Sigmoid colon (tissue), 7 donors: ENCODE measurements at regions of chrX and their contacts with region 1.

Region 1: DNA sequence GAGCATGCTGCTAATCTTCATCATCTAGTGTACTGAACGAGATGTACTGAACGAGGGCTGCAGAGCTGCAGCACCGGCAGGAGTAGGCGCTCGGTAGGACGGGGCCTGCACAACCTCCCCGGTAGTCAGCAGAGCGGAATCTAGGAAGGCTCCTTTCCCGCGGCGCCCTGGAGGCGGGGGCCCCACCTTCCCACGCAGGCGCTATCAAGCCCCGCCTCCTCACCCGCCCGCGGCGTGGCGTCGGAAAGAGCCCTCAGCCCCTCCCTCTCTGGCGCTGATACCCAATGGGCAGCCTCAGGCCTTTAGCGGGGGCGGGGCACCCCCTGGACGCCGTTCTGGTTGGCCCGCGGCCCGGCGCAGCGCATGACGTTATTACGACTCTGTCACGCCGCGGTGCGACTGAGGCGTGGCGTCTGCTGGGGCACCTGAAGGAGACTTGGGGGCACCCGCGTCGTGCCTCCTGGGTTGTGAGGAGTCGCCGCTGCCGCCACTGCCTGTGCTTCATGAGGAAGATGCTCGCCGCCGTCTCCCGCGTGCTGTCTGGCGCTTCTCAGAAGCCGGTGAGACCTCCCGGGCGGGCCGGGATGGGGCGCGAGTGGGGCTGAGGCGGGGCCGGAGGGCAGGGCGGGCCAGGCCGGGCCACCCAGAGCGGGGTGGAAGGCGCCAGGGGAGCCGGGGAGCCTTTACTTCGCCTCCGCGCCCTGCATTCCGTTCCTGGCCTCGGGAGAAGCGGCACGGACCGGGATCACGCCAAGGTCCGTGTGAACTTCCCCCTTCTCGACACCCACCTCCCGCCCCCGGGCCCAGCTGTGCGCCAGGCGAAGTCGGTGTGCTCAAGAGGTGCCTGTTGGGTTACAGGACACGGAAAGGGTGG is at the start of gene PDHA1:
- DNase-seq: peak; percentile 96
- H3K4me3 ChIP-seq: peak within 1 kb of the TSS; percentile 66 to 74 (median 70)
- H3K27ac ChIP-seq: peak within 1 kb of the TSS; percentile 83 to 95 (median 92)
- H3K4me1 ChIP-seq: peaks cover 0 to 14% (median 9%) of the 10 kb centered on the region in 4 donors
- H3K27me3 ChIP-seq: no peaks in the 10 kb centered on the region
- CTCF ChIP-seq: no peak
- EP300 ChIP-seq: peak in 1 of 4 donors; percentile 60
- POLR2A ChIP-seq: peak; percentile 4 to 39
- total RNA-seq, gene PDHA1: 51.7 to 71.3 (median 60.3) TPM

Region 2: GRCh38 chrX:18886344-18887161 is 457.2 kb before region 1 on chrX:
- intact Hi-C with region 1: loop called (anchors 10 kb)
- DNase-seq: peak; percentile 88
- H3K4me3 ChIP-seq: peak overlapping the region; percentile 17 to 41 (median 33)
- H3K27ac ChIP-seq: peak overlapping the region; percentile 69 to 72 (median 70)
- H3K4me1 ChIP-seq: peaks cover 0 to 21% (median 15%) of the 10 kb centered on the region in 4 donors
- H3K27me3 ChIP-seq: no peaks in the 10 kb centered on the region
- CTCF ChIP-seq: peak; percentile 33 to 61 (median 50)
- EP300 ChIP-seq: no peak
- POLR2A ChIP-seq: no peak

Region 3: DNA sequence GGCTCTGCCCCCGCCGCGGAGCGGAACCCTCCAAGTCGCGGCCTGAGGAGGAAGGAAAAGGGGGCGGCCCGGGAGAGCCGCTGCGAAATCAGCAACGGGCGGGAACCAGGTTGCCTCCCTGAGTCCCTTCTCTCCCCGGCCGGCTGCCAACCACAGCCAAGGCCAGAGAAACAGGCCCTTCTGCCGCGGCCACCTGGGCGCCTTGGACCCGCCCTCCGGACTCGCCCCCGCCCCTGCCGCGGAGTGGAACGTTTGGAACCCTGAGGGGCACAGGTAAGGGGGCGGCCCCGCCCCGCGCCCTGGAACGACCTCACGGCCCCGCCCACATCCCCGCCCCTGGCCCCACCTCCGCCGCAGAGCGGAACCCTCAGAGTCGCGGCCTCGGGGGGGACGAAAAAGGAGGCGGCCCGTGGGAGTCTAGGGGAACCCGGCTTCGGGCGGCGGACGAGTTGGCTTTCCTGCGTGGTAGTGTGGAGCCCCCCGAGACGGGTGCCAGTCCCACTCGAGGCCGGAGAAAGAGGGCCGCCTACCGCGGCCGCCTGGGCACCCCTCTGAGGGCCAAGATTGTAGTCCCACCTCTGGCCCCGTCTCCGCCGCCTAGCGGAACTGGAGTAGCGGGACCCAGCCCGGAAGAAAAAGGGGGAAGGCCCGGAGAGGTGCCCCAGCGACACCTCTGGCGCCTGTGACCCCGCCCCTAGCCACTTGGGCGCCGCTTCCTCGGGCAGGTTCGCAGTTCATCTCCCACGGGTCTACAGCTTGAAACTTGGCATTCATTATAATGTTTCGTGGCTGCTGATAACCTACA is 359.2 kb before region 1 on chrX:
- intact Hi-C with region 1: loop called (anchors 10 kb)
- DNase-seq: peak; percentile 89
- H3K4me3 ChIP-seq: peak overlapping the region; percentile 47 to 74 (median 70)
- H3K27ac ChIP-seq: peak overlapping the region; percentile 86 to 90 (median 88)
- H3K4me1 ChIP-seq: peaks cover 0 to 11% (median 6%) of the 10 kb centered on the region in 4 donors
- H3K27me3 ChIP-seq: peaks cover 0 to 5% (median 0%) of the 10 kb centered on the region in 3 donors
- CTCF ChIP-seq: peak; percentile 54 to 66 (median 60)
- EP300 ChIP-seq: no peak
- POLR2A ChIP-seq: no peak

Region 4: DNA sequence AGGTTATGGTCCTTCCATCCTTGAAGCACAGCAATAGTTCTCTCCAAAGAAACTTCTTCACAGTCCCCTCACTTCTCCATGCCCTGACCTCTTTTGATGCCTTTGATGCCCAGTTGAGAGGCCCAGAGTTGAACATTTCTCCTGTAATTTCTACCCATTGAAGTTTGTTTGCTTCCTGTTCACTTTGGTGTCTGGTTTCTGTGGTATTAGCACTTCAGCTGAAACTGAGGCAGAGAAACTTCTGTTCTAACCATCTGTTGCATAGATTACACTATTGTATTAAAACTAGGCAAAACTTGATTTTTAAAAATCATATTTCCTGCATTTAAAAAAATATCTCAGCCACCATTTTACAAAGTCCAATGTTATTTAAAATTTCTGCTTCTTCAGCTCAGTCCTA is 131.7 kb before region 1 on chrX:
- intact Hi-C with region 1: no loop called
- DNase-seq: no peak
- H3K4me3 ChIP-seq: no peak overlapping the region
- H3K27ac ChIP-seq: no peak overlapping the region
- H3K4me1 ChIP-seq: no peaks in the 10 kb centered on the region
- H3K27me3 ChIP-seq: no peaks in the 10 kb centered on the region
- CTCF ChIP-seq: no peak
- EP300 ChIP-seq: no peak
- POLR2A ChIP-seq: no peak

Region 5: DNA sequence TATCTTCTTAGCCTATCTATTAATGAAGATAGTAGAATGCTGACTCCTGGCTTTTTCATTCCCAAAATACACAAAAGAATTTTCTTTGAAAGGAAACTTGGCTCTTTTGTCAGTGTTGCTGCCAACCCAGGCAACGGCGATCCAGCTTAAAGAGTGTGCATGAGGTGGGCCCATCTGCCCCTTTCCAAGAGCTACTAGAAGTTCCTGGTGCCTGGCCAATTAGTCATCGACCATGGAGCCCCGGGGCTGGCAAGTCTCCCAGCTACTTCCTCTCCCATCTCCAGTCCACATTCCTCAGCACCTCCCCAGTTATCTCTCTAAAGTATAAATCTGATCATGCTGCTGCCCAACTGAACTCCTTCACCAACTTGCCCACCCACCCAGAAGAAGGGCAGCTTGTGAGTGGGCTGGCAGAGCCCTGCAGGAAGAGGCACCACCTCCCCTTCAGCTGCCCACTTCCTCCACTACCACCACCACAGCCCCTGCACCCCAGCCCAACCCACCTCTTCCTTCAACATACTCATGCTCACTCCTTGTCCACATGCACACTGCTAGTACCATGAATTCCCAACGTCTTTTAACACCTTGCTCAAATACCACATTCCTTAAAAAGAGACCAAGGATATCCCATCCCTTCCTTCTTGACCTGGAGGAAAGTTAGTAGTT is 329.7 kb after region 1 on chrX:
- intact Hi-C with region 1: no loop called
- DNase-seq: peak; percentile 84
- H3K4me3 ChIP-seq: no peak overlapping the region
- H3K27ac ChIP-seq: no peak overlapping the region
- H3K4me1 ChIP-seq: peaks cover 0 to 3% (median 0%) of the 10 kb centered on the region in 4 donors
- H3K27me3 ChIP-seq: peaks cover 0 to 6% (median 0%) of the 10 kb centered on the region in 3 donors
- CTCF ChIP-seq: no peak
- EP300 ChIP-seq: no peak
- POLR2A ChIP-seq: no peak